Left cardiac atrium (tissue), 4 donors: ENCODE measurements at regions of chr15 and their contacts with region 1.

Region 1: DNA sequence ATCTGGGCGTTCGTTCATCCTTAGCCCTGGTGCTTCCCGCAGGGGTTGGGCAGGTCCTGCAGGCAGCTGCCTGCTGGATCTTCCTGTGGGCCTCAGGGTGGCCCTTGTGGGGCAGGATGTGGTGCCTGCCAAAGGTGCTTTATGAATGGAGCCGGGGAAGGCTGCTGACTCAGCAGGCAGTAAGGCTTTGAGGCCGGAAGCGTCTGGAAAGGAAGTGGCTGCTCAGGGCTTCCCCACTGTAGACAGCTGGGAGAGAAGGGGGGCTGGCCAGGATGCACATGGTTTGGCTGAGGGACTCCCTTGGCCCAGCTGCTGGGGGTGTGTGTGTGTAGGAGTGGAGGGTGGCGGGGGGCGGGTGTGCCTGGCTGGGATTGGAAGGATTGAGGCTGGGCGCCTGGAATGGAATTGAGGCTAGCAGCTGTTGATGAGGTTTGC is 12.9 kb downstream of the CD276 start:
- DNase-seq: peak; percentile 90
- ATAC-seq: peak; percentile 94 to 95

Region 2: GRCh38 chr15:73284090-73284716 is 412.8 kb before region 1 on chr15:
- intact Hi-C with region 1: loop called in 1 of 2 experiments (anchors 10 kb)
- DNase-seq: no peak
- ATAC-seq: peak; percentile 13 to 30

Region 3: DNA sequence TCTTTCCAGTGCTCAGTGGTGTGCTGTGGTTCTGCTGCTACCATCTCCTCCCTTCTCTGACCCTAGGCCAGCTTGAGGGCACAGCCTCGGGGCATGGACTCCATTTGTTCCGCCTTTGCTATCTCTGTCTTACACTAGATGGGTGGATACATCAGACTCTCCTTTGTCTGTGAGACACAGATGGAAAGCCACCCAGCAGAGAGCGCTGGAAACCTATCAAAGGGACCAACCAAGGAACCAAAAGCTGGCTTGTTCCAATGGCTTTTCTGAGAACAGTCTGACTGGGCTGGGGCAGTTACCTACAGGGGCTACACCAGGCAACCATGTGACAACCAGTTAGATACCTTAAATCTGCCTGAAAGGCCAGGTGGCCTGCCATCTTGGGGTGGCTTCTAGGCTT is 127.7 kb before region 1 on chr15:
- intact Hi-C with region 1: loop called in 1 of 2 experiments (anchors 5 kb)
- DNase-seq: no peak
- ATAC-seq: no peak

Region 4: DNA sequence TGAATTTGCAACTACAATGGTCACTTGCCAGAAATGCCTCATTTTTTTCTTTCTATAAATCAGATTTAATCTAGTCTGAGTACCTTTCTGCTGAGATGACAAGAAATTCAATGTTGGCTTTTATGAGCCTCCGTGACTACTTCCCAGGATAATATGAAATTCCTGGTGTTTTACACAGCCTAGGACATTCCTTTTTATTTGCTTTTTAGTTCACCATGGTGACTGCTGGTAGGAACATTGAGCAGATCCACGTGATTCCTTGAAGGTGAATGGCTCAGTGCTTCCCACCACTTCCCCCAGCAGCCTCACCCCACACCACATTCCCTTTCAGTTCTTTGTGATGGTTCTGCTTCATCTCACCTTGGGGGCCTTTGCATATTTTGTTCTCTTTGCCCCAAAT is 59.5 kb before region 1 on chr15:
- intact Hi-C with region 1: loop called in 1 of 2 experiments (anchors 2 kb)
- DNase-seq: no peak
- ATAC-seq: no peak

Region 5: DNA sequence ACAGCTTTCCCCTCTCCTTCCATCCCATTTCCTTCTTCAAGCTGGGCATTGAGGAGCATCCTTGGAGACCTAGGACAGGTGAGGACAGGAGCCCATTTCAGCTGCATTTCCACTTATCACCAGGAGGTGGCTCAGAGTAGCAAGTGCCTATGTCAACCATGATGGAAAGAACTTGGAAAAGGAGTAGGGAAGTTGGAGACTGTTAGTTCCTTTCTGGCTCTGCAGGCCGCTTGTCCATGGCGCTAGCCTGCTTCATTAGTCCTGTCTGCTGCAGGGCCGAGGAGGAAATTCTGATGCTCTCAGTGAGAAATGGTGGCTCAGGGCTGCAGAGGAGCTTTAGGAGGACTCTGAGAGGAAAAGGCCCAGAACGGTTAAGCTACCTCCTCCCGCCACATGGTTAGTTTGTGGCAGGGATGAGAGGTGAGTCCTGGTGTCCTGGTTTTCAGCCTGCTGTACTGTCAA is 19.9 kb before region 1 on chr15:
- intact Hi-C with region 1: loop called in 1 of 2 experiments (anchors 2 kb)
- DNase-seq: peak; percentile 65
- ATAC-seq: peak; percentile 85 to 86

Region 6: GRCh38 chr15:73753250-73754130 is 56.4 kb after region 1 on chr15 and contains the start of gene INSYN1:
- intact Hi-C with region 1: no loop called
- DNase-seq: peak; percentile 67
- ATAC-seq: peak; percentile 56 to 62
- total RNA-seq, gene INSYN1: 79.3 to 80.8 TPM